Activated B cell treated with CpG ODN at 0.5 μM for 24 hours (primary cell): ENCODE measurements at regions of chr1 and their contacts with region 1.

Region 1: GRCh38 chr1:89524369-89525168 is at the start of gene LRRC8B:
- DNase-seq: peak; percentile 85
- ATAC-seq: peak; percentile 84
- H3K4me3 Mint-ChIP-seq: peak within 1 kb of the TSS; percentile 92
- H3K27ac Mint-ChIP-seq: peak within 1 kb of the TSS; percentile 91
- H3K4me1 Mint-ChIP-seq: peaks cover 31% of the 10 kb centered on the region
- H3K27me3 Mint-ChIP-seq: no peaks in the 10 kb centered on the region
- CTCF ChIP-seq: no peak
- total RNA-seq, gene LRRC8B: 14.7 and 19.1 TPM in 2 replicates

Region 2: GRCh38 chr1:89489047-89489729 is 35.4 kb before region 1 on chr1:
- CTCF ChIA-PET with region 1: no interaction called
- POLR2A ChIA-PET with region 1: no interaction called
- intact Hi-C with region 1: no loop called
- DNase-seq: no peak
- ATAC-seq: no peak
- H3K4me3 Mint-ChIP-seq: no peak overlapping the region
- H3K27ac Mint-ChIP-seq: no peak overlapping the region
- H3K4me1 Mint-ChIP-seq: no peaks in the 10 kb centered on the region
- H3K27me3 Mint-ChIP-seq: peaks cover 4% of the 10 kb centered on the region
- CTCF ChIP-seq: no peak

Region 3: DNA sequence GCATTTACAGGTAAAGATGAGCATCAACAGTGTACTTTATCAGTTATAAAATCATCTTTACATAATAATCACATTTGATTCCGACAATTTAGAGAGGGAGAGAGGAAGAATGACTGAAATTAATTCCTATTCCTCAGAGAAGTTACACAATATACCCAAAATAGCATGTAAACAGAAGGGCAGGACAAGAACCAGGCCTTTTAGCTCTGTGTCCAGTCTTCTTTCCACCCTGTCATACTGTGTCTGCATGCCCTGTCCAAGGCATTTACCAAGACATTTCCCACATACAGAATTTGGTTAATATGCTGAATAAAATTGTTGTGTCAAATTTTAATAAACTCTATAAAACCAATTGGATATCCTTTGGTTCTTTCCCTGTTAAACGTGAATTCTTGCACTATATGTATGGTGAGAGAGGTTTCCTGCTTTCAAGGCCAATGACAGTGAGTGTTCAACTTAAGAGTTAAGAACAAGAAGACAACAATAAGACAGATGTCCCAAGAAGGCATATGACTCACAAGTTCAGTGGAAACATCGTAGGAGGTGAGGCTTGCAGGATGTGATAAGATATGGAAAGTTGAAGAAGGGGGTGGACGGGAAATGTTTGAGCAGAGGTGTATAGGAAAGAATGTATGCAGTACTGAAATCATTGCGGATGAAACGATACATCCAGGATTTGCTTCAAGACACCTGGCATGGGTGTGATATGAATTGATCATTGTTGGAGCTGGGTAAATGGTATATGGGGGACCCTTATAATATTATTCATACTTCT is 20.9 kb after region 1 on chr1:
- CTCF ChIA-PET with region 1: no interaction called
- POLR2A ChIA-PET with region 1: interaction called, 3 read pairs
- intact Hi-C with region 1: loop called (anchors 2 kb)
- DNase-seq: no peak
- ATAC-seq: no peak
- H3K4me3 Mint-ChIP-seq: no peak overlapping the region
- H3K27ac Mint-ChIP-seq: no peak overlapping the region
- H3K4me1 Mint-ChIP-seq: peaks cover 12% of the 10 kb centered on the region
- H3K27me3 Mint-ChIP-seq: no peaks in the 10 kb centered on the region
- CTCF ChIP-seq: no peak

Region 4: DNA sequence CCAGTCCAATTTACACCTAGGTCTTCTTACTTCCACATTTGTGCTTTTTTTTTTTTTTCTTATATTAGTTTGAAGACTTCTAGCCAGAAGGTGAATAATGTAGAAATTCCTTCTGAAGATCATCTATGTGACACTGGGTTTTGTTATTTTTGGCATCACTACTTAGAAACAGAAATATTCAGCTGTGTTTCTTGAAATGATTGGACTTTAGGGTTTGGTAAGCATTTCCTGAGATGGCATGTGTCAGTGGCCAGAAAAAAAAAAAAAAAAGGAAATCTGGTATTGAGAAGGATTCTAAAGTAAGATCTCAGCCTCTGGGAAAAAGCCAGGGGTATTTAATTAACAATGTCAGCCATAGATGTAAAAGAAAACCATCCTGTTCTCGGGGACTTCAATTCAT is 64.9 kb after region 1 on chr1:
- CTCF ChIA-PET with region 1: interaction called, 3 read pairs
- POLR2A ChIA-PET with region 1: no interaction called
- intact Hi-C with region 1: loop called (anchors 2 kb)
- DNase-seq: no peak
- ATAC-seq: no peak
- H3K4me3 Mint-ChIP-seq: no peak overlapping the region
- H3K27ac Mint-ChIP-seq: no peak overlapping the region
- H3K4me1 Mint-ChIP-seq: no peaks in the 10 kb centered on the region
- H3K27me3 Mint-ChIP-seq: no peaks in the 10 kb centered on the region
- CTCF ChIP-seq: no peak

Region 5: GRCh38 chr1:89632657-89633247 is 108.2 kb after region 1 on chr1 and contains the start of gene LRRC8C:
- CTCF ChIA-PET with region 1: no interaction called
- POLR2A ChIA-PET with region 1: interaction called, 3 read pairs
- intact Hi-C with region 1: loop called (anchors 1 kb)
- DNase-seq: peak; percentile 93
- ATAC-seq: peak; percentile 88
- H3K4me3 Mint-ChIP-seq: peak within 1 kb of the TSS; percentile 94
- H3K27ac Mint-ChIP-seq: peak within 1 kb of the TSS; percentile 95
- H3K4me1 Mint-ChIP-seq: peaks cover 33% of the 10 kb centered on the region
- H3K27me3 Mint-ChIP-seq: no peaks in the 10 kb centered on the region
- CTCF ChIP-seq: no peak
- total RNA-seq, gene LRRC8C: 7.4 and 8.4 TPM in 2 replicates

Region 6: GRCh38 chr1:89762779-89763648 is 238.4 kb after region 1 on chr1:
- CTCF ChIA-PET with region 1: interaction called, 24 read pairs
- POLR2A ChIA-PET with region 1: interaction called, 4 read pairs
- intact Hi-C with region 1: loop called (anchors 1 kb)
- DNase-seq: peak; percentile 79
- ATAC-seq: peak; percentile 100
- H3K4me3 Mint-ChIP-seq: peak overlapping the region; percentile 87
- H3K27ac Mint-ChIP-seq: peak overlapping the region; percentile 70
- H3K4me1 Mint-ChIP-seq: peaks cover 18% of the 10 kb centered on the region
- H3K27me3 Mint-ChIP-seq: peaks cover 4% of the 10 kb centered on the region
- CTCF ChIP-seq: peak; percentile 52

Region 7: DNA sequence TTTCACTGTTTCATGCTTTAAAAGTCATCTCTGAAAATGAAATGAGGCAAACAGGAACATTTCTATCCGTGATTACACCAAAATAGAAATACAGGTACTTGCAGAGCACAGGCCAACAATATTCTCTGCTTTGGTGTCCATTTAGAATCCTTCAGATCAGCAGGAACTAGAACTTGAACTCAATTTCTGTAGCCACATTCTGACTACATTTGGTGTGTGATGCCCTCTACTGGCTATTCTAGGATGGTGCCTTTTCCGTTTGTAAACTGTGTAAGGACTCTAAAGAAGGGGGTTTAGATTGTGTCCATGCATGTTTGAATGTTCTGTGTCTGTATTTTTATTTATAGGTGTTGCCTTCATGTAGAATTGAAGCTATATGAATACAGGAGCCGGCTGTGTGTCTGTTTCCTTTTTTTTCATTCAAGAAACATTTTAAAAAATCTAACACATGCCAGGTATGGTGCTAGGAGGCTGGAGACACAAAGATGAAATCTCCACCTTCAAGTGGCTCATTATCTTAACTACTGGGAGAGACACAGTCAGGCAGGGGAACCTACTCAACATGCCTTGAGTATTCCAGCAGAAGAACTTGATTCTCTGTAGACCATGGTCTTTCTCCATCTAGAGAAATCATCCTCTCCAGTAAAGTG is 462.7 kb after region 1 on chr1:
- CTCF ChIA-PET with region 1: no interaction called
- POLR2A ChIA-PET with region 1: no interaction called
- intact Hi-C with region 1: loop called (anchors 2 kb)
- DNase-seq: no peak
- ATAC-seq: peak; percentile 74
- H3K4me3 Mint-ChIP-seq: no peak overlapping the region
- H3K27ac Mint-ChIP-seq: no peak overlapping the region
- H3K4me1 Mint-ChIP-seq: no peaks in the 10 kb centered on the region
- H3K27me3 Mint-ChIP-seq: no peaks in the 10 kb centered on the region
- CTCF ChIP-seq: peak; percentile 60